MCF 10A (cell line): ENCODE measurements at regions of chr3 and their contacts with region 1.

Region 1: GRCh38 chr3:123723522-123724168 is 138.8 kb upstream of the HACD2 start:
- DNase-seq: peak; percentile 93
- H3K4me3 Mint-ChIP-seq: no peak overlapping the region
- H3K27ac Mint-ChIP-seq: no peak overlapping the region
- H3K4me1 Mint-ChIP-seq: peaks cover 7% of the 10 kb centered on the region
- H3K27me3 Mint-ChIP-seq: no peaks in the 10 kb centered on the region
- CTCF ChIP-seq: peak; percentile 64

Region 2: DNA sequence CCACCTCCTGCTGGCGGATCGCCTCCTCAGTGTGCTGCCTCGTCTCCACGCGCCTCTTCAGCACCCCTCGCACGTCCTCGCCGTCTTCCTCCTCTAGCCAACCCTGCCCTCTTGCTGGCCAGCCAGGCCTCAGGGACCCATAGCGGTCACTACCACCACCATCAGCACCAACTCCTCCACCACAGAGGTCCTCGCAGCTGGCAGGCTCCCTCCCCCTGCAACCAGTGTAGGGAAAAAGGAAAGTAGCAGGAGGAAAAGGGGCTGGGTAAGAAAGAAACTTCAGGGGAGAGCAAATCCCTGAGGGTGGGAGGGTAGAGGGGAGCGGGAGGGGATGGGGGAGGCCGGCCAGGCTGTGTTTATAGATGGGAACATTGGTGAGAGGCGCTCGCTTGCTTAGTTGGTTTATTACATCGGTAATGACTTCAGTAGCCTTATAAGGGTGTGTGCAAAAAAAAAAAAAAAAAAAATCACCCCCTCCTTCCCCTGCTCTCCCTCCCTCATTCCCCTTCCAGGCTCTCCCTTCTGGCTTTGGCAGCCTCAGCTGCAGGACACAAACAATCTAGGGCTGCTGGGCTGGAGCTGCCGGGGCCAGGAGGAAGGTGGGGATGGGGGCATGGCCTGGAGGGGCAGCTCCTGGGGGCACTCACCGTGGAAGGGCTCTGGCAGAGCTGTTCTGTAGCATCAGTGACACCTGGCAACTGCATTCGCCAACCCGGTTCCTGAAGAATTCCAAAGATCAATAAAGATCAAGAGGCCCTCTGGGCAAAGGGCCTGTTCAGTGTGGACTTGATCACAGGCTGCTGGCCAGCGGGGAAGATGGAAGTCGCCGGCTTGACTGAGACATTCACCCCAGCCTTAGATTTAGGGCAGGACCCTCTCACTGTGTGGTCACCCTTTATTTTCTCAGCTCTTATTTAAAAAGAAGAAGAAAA is 22.6 kb before region 1 on chr3:
- CTCF ChIA-PET with region 1: interaction called, 18 read pairs
- POLR2A ChIA-PET with region 1: no interaction called
- intact Hi-C with region 1: no loop called
- DNase-seq: no peak
- H3K4me3 Mint-ChIP-seq: no peak overlapping the region
- H3K27ac Mint-ChIP-seq: no peak overlapping the region
- H3K4me1 Mint-ChIP-seq: peaks cover 5% of the 10 kb centered on the region
- H3K27me3 Mint-ChIP-seq: no peaks in the 10 kb centered on the region
- CTCF ChIP-seq: no peak

Region 3: DNA sequence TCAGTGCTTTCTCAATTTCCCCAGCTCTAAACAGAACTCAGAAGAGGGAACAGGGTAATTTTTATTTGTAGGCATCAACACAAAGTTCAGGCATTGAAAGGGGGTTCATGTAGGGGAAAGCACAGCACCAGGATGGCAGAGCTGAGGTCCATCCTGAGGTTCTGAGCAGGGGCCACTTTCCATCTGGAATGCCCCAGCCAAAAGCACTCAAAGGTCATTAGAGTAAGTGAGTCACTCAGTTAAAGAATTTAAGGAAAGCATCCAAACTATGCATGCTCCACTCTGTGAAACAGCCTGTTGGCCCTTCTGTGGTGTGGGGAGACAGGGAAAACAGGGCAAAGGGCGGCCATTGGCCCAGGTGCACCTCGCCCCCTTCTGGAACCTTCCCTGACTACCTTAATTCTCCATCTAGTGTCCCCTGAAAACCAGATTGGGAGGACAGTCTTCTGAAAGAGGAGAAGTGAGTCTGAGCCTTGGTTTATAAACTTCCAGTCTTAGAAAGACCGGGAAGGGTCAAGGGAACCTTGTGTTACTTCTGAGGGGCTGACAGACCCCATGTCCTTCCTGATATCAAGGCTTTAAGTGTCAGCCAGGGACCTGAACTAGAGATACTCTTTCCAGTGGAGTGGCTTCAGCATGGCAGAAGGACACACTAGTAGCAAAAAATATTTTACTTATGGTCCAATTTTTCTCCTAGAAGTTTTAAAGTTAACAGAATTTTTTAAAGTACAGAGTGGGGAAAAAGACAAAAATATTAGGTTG is 27.2 kb after region 1 on chr3:
- CTCF ChIA-PET with region 1: interaction called, 11 read pairs
- POLR2A ChIA-PET with region 1: no interaction called
- intact Hi-C with region 1: no loop called
- DNase-seq: peak; percentile 65
- H3K4me3 Mint-ChIP-seq: no peak overlapping the region
- H3K27ac Mint-ChIP-seq: peak overlapping the region; percentile 69
- H3K4me1 Mint-ChIP-seq: peaks cover 29% of the 10 kb centered on the region
- H3K27me3 Mint-ChIP-seq: no peaks in the 10 kb centered on the region
- CTCF ChIP-seq: no peak

Region 4: DNA sequence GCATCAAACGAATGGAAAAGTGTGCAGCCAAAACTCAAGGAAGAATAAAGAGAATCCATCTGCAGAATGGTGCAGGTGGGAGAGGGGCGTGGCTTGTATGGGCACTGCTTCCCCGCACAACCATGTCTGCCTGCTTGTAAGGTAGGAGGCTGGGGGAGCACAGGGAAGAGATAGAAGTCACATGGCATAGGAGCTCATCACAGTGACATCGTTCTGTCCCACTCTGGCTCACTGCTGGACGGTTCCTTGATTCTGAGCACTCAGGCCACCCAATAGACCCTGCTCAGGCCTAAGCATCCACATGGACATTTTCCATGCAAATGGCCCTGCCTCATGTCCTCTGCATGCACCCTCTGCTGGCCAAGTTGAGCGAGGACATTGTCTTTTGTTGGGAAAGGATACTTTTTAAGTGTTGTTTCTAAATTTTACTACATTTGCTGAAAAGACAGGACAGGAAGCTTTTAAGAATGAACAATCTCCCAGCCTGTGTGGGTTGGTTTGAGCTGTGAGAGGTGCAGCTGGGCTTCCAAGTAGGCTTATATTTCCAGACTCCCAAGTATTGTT is 157.4 kb after region 1 on chr3:
- CTCF ChIA-PET with region 1: interaction called, 5 read pairs
- POLR2A ChIA-PET with region 1: no interaction called
- intact Hi-C with region 1: loop called (anchors 1 kb)
- DNase-seq: peak; percentile 50
- H3K4me3 Mint-ChIP-seq: no peak overlapping the region
- H3K27ac Mint-ChIP-seq: no peak overlapping the region
- H3K4me1 Mint-ChIP-seq: no peaks in the 10 kb centered on the region
- H3K27me3 Mint-ChIP-seq: peaks cover 14% of the 10 kb centered on the region
- CTCF ChIP-seq: peak; percentile 29